GM18951 (cell line): ENCODE measurements at regions of chr3 and their contacts with region 1.

Region 1: DNA sequence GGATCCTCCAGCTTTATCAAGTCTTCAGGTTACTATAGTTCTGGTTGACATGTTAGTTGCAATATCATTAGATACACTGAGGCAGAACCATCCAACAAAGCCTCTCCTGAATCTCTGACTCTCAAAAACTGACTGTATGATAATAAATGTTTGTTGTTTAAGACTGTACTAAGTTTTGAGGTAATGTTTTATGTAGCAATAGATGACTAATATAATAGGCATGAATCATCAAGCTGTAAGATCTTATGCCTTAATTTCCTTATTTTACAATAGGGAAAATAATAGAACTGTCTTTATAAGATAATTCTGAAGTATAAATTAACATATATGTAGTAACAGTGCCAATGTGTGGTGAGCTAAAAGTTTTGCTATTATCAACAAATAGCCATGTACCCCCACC is 88.9 kb upstream of the TBC1D5 start:
- POLR2A ChIP-seq: no peak

Region 2: GRCh38 chr3:17278006-17278405 is 553.4 kb before region 1 on chr3:
- in situ Hi-C with region 1: loop called (anchors 10 kb)
- POLR2A ChIP-seq: no peak

Region 3: DNA sequence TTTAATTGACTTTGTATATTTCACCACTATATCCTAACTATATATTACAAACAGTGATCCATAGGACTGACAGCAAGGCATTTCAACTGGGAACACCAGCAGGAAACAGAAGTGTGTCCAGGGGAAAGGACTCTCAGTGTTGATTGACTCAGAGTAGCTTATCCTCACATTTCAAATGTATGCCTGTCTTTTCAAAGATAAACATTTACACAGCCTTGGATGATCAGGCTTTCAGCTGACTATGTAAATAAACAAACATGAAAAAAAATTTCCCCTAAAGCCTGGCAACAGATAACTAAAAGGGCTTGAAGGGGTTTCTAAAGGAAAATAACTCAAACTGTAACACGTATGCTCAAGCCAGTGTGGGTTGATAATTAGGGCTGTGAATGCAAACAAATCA is 410.7 kb before region 1 on chr3:
- in situ Hi-C with region 1: no loop called
- POLR2A ChIP-seq: no peak

Region 4: DNA sequence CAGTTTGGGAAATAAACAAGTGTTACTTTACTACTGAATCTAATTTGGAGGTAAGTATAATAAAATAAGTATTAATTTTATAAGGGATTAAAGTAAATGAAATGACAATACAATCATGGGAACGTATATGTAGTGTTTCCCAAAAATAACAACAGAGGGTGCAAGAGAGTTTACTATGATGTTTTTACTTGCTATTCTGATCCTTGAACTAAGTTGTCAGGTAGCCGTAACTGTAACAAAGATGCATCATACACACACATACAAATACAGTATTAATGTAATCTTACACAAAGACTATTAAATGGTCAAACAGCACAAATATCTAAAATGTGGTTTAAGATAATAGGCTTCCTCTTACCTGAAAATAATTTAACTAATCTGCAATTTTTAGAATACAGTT is 400.4 kb before region 1 on chr3:
- in situ Hi-C with region 1: loop called (anchors 10 kb)
- POLR2A ChIP-seq: no peak

Region 5: DNA sequence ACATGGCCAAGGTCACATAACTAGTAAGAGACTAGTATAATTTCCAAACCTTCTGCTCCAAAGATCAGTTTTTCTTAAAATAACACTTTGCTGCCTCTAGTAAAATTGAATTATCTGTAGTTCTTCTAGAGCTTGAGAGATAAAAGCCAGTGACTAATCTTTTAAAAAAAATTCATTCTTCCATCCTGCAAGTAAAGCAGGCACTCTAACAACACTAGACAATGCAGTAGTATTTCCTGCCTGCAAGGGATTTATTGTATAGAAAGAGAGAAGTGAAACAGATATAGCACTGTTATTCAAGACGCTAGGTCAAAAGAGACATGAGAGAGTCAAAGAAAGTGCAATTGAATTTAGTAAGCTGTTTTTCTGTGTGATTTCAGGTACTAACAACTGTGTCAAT is 70.5 kb after region 1 on chr3:
- in situ Hi-C with region 1: no loop called
- POLR2A ChIP-seq: no peak